Activated CD4-positive, alpha-beta memory T cell treated with anti-CD3 and anti-CD28 coated beads, Interleukin-2, amount 10 ng/mL, durations not matched to agents 7 days and 5 days (primary cell): ENCODE measurements at regions of chr6 and their contacts with region 1.

Region 1: DNA sequence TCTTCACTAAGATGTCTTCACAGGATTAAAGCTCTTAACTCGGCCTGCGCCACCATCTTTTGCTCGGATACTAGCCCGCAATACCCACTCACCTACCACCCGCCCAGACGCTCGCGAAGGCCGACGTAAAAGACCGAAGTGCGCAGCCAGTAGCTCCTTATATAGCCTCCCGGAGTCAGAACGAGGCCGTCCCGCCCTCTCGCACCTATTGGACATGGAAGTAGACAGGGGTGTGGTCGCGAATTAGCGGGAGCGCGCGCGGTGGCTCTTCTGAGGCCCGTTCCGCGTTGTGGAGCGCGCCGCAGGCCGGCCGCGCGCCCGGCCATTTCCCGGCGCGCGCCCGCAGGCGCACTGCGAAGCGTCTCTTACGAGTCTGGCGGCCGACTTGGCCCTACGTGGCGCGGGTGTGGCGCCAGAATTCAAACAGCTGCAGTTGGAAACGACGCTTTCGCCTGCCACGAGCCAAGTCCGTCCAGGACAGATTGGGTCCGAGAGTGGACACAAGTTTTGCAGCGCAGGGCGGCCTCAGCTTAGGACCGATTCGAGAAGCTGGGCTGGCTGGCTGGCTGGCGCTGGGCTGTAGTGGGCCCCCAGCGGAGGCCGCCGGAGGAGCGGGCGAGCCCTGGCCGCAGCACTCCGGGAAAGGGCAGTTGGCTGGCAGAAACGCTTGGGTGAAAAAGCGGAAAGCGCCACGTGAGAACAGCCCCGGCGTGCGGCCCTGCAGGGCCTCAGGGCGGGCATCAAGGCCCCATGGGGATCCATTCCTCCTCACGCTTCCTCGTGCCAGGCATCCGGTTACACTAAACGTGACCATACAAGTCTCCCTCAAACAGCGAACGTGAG is 36.1 kb upstream of the SYNCRIP start:
- DNase-seq: peak; percentile 98
- H3K4me3 Mint-ChIP-seq: peak overlapping the region; percentile 89
- H3K27ac Mint-ChIP-seq: peak overlapping the region; percentile 92
- H3K4me1 Mint-ChIP-seq: peaks cover 52% of the 10 kb centered on the region
- H3K27me3 Mint-ChIP-seq: no peaks in the 10 kb centered on the region

Region 2: DNA sequence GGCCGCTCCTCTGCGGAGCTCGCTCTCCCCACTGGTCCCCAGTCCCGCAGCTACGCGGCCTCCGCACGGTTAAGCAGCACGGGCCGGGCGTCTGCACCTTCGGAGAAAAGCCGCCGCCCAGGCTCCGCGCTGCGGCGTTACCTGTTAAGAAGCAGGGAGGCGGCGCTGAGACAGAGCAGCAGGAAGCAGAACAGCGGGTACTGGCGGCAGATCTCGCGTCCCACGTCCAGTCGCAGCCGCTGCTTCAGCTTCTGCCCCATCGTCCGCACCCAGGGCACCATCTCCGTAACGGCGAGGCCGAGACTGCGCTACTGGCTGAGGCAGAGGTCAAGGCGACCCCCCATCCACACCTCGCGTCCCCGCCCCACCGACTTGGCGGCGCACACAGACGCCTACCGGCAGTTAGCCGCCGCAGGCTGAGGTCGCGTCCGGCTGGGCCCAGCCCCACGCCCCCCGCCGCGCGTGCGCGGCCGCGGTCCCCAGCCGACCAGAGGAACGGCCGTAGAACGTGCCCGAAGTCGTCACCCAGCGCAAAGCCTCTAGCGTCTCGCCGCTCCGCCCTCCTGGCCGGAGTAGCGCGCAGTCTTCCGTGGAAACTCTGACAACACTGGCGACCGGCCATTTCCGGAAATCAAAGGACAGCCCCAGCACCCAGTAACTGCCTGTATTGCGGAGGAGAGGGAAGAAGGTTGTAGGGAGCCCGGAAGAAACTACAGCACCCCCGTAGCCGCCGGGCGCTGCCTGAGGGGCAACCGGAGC is 85.2 kb before region 1 on chr6 and contains the start of gene SNX14:
- CTCF ChIA-PET with region 1: interaction called, 10 read pairs
- POLR2A ChIA-PET with region 1: interaction called, 141 read pairs
- DNase-seq: peak; percentile 81
- H3K4me3 Mint-ChIP-seq: peak within 1 kb of the TSS; percentile 84
- H3K27ac Mint-ChIP-seq: peak within 1 kb of the TSS; percentile 90
- H3K4me1 Mint-ChIP-seq: peaks cover 28% of the 10 kb centered on the region
- H3K27me3 Mint-ChIP-seq: no peaks in the 10 kb centered on the region
- total RNA-seq, gene SNX14: 48.2 to 50.9 TPM

Region 3: DNA sequence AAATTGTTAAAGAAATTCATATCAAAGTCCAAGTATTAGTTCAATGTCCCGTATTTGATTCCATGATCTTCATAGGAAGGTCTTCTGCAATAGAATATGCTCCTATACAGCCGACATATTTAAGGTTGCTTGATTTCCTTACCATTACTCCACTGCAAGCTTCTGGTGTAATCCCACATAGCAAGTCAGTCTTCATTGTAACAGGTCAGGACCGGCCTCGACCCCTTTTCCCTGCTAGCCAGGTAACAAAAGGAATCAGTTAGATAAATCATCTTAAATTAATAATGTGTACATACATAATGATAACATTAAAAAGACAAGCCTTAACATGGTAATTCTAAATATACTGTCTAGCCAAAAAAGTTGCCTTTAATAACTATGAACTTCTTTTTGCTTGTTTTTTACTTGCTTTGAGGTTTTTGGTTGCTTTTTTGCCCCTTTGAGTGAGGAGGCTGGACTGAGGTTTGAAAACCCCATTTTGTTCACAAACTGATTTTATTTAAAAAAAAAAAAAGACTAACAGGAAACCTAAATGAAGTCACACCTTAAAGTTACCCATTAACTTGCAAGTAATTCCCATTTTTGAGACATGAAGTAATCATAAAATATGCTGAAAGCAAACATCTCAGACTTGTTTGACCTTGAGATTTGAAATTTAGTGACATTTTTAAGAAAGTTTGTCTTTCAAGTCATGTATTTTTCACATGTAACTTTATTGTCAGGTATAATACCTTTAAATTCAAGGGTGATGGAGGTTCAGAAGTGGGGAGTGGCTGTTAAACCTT is 65.9 kb before region 1 on chr6:
- CTCF ChIA-PET with region 1: no interaction called
- POLR2A ChIA-PET with region 1: interaction called, 14 read pairs
- DNase-seq: no peak
- H3K4me3 Mint-ChIP-seq: no peak overlapping the region
- H3K27ac Mint-ChIP-seq: no peak overlapping the region
- H3K4me1 Mint-ChIP-seq: peaks cover 12% of the 10 kb centered on the region
- H3K27me3 Mint-ChIP-seq: no peaks in the 10 kb centered on the region

Region 4: GRCh38 chr6:85628353-85628752 is 50.5 kb before region 1 on chr6:
- CTCF ChIA-PET with region 1: no interaction called
- POLR2A ChIA-PET with region 1: interaction called, 29 read pairs
- DNase-seq: no peak
- H3K4me3 Mint-ChIP-seq: no peak overlapping the region
- H3K27ac Mint-ChIP-seq: no peak overlapping the region
- H3K4me1 Mint-ChIP-seq: peaks cover 54% of the 10 kb centered on the region
- H3K27me3 Mint-ChIP-seq: no peaks in the 10 kb centered on the region

Region 5: DNA sequence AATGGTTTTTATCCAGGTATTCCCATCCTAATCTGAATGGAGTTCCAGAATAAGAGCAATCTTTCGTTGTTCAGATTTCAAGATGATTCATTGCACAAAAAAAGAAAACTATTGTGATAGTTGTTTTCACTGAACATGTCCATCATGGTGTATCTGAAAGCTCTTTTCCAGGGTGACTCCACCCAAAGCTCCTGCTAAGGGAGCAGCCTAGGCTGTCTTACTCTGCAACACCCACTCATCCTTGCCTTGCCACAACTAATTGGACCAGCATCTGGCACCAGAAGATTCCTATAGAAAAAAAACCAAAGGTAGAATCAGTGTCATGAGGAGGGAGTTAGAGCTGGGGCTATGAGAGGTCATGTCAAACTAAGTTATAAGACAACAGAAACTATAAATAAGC is 28.2 kb before region 1 on chr6:
- CTCF ChIA-PET with region 1: interaction called, 116 read pairs
- POLR2A ChIA-PET with region 1: interaction called, 1,187 read pairs
- DNase-seq: no peak
- H3K4me3 Mint-ChIP-seq: no peak overlapping the region
- H3K27ac Mint-ChIP-seq: no peak overlapping the region
- H3K4me1 Mint-ChIP-seq: peaks cover under 1% of the 10 kb centered on the region
- H3K27me3 Mint-ChIP-seq: peaks cover 4% of the 10 kb centered on the region

Region 6: DNA sequence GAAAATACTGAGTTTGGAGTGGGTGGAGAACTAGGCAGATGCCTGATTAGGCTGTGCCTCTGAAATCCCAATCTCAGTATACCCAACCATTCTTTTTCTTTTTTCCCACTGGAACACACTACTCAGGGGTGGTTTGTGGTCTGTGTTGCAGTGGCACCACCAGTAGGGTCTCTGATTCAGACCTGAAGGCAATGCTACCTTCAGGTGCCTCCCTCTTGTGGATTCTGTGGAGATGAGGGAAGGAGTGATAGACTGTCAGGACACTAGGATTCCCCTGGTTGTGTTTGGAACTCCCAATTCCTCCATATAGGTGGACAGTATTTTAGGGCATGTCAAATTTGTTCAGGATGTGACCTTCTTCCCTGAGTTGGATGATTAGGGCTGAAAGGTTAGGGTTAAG is 11.2 kb after region 1 on chr6:
- CTCF ChIA-PET with region 1: no interaction called
- POLR2A ChIA-PET with region 1: interaction called, 11 read pairs
- DNase-seq: no peak
- H3K4me3 Mint-ChIP-seq: no peak overlapping the region
- H3K27ac Mint-ChIP-seq: no peak overlapping the region
- H3K4me1 Mint-ChIP-seq: no peaks in the 10 kb centered on the region
- H3K27me3 Mint-ChIP-seq: peaks cover 2% of the 10 kb centered on the region

Region 7: DNA sequence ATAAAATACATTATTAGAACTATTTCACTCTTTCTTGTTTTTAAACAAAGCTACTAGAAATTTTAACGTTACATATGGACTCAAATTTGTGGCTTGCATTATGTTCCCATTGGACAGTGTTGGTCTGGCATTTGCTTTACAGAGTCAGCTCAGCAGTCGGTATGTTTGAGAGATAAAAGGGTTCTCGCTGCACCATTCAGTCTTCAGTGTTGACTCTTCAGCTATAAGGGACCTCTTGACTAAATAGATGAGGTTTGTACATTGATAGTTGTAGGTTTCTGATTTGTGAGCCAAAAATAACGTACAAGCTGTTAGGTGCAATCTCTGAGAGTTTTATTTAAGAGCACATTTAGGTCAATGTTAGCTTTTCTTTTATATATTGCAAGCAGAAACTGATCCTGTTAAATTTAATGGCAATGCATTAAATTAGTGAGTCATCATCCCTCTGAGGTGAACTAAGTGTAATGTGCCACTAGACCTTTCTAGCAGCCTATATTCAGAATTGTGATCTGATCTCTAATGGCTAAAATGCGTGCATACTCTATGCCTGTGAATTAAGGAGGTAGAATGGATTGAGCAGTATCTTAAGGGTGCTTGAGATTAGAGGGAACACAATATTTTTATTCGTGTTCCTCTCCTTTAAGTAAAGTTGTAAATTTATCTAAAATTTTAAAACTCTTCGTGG is 449.4 kb after region 1 on chr6:
- CTCF ChIA-PET with region 1: no interaction called
- POLR2A ChIA-PET with region 1: no interaction called
- DNase-seq: no peak
- H3K4me3 Mint-ChIP-seq: no peak overlapping the region
- H3K27ac Mint-ChIP-seq: no peak overlapping the region
- H3K4me1 Mint-ChIP-seq: no peaks in the 10 kb centered on the region
- H3K27me3 Mint-ChIP-seq: no peaks in the 10 kb centered on the region